Activated CD4-positive, alpha-beta T cell treated with anti-CD3 and anti-CD28 coated beads, Interleukin-2, amount 10 ng/mL, durations not matched to agents 24 days and 14 days (primary cell): ENCODE measurements at regions of chr19 and their contacts with region 1.

Region 1: DNA sequence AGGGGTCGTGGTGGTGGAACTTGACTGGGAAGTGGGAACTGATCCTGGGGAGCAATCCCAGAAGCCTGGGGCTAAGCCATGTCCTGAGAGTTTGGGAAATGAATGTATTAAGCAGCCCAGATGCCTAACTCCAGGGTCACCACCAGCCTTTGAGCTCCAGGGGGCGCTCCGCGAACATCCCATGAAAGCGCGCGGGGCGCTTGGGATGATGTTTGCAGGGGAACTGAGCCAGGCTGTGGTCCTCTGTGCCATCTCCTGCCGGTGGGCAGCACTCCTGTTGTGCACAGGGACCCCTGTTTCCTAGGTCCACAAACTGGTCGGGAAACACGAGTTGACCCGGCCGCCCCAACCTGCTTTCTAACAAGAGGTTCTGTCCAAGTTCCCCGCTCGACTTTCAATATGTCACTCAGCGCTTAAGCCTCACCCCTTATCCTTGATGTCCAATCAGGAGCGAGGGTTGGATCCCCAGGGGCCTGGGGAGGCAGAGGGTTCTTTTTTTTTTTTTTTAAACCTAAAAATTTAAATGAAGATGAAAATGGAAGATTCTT is 14.4 kb downstream of the LEUTX start:
- DNase-seq: peak; percentile 93
- H3K4me3 Mint-ChIP-seq: peak overlapping the region; percentile 83
- H3K27ac Mint-ChIP-seq: no peak overlapping the region
- H3K4me1 Mint-ChIP-seq: peaks cover 11% of the 10 kb centered on the region
- H3K27me3 Mint-ChIP-seq: peaks cover 20% of the 10 kb centered on the region

Region 2: DNA sequence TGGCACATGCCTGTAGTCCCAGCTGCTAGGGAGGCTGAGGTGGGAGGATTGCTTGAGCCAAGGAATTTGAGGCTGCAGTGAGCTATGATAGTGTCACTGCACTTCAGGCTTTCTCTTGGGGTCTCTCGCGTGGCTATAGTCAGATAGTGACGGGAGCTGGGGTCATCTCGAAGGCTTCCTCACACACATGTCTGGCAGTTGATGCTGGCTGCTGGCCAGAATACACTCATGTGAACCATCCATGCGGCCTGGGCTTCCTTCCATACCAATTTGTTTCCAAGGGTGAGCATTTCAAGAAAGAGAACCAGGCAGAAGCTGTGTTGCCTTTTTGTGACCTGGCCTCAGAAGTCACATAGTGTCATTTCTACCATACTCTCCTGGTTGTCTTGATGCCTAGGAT is 12.0 kb after region 1 on chr19:
- intact Hi-C with region 1: no loop called
- DNase-seq: no peak
- H3K4me3 Mint-ChIP-seq: no peak overlapping the region
- H3K27ac Mint-ChIP-seq: no peak overlapping the region
- H3K4me1 Mint-ChIP-seq: no peaks in the 10 kb centered on the region
- H3K27me3 Mint-ChIP-seq: peaks cover 12% of the 10 kb centered on the region

Region 3: DNA sequence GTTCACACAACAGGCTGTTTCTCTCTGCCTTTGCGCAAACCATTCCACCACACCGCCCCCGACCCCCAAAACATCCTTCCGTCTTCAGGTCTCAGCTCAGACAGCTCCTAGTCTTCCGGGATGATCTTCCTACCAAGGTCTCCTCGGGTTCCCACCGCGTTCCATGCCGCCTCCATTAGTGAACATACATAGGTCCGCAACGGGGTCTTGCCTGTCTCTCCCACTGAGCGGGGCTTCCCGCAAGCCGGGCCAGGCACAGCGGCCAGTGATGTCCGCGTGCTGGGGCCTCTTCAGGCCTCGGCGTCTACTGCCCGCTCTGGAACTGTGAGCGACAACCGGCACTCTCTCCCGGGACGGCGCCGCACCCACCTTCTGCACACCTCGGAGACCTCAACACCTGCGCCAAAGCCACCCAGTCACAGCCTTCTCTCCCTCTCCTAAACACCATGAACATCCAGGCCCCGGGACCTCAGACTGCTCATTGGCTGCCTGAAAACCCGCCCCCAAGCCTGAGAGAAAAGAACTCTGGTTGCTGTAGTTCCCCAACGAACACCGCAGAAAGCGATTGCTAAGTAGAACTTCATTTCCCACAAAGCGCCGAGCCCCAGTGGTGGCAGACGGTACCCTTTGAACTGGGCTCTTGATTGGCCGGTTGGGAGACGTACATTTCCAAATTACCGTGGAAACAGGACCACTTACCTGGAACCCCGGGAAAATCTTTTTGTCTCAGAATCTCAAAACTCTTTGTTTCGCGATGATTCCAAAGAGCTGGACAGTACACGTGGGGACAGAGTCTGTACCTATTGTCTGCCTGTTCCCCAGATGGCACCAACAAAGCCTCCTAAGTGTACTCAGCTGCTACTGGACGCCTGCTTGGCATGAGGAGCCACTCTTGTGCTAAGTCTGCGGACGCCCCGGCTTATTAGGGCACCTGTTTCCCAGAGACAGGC is 31.3 kb after region 1 on chr19:
- intact Hi-C with region 1: loop called (anchors 2 kb)
- DNase-seq: peak; percentile 96
- H3K4me3 Mint-ChIP-seq: no peak overlapping the region
- H3K27ac Mint-ChIP-seq: no peak overlapping the region
- H3K4me1 Mint-ChIP-seq: peaks cover 5% of the 10 kb centered on the region
- H3K27me3 Mint-ChIP-seq: no peaks in the 10 kb centered on the region